ENCODE measurements at regions of chr17 and their contacts with region 1.

Region 1: GRCh38 chr17:18141210-18141803 is 32.8 kb downstream of the MYO15A start:
- DNase-seq: peak; percentile 75
- H3K4me3 ChIP-seq: no peak overlapping the region
- H3K27ac ChIP-seq: no peak overlapping the region
- H3K4me1 ChIP-seq: no peaks in the 10 kb centered on the region
- CTCF ChIP-seq: peak; percentile 89

Region 2: DNA sequence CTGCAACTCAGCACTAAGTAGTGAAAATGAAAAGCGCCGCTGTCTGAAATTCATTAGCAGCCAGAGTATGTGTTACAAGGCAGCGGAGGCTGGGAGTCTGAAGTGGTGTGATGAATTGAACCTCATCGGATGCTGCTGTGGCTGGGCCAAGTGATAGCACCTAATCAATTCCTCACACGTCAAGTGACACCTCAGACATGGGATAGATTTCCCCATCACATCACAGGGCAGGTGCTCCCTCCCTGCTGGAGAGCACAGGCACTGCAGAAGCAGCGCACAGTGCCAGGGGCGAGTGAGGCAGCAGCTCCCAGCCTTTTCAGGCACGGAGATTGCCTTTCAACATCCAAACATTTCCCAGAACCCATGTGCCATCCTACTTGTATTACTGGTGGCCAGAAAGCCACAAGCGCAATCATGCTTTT is 136.4 kb before region 1 on chr17:
- CTCF ChIA-PET with region 1: no interaction called
- POLR2A ChIA-PET with region 1: no interaction called
- intact Hi-C with region 1: no loop called
- DNase-seq: no peak
- H3K4me3 ChIP-seq: no peak overlapping the region
- H3K27ac ChIP-seq: no peak overlapping the region
- H3K4me1 ChIP-seq: no peaks in the 10 kb centered on the region
- CTCF ChIP-seq: no peak

Region 3: GRCh38 chr17:18217412-18218015 is 76.2 kb after region 1 on chr17:
- CTCF ChIA-PET with region 1: no interaction called
- POLR2A ChIA-PET with region 1: no interaction called
- intact Hi-C with region 1: loop called (anchors 2 kb)
- DNase-seq: peak; percentile 70
- H3K4me3 ChIP-seq: no peak overlapping the region
- H3K27ac ChIP-seq: no peak overlapping the region
- H3K4me1 ChIP-seq: no peaks in the 10 kb centered on the region
- CTCF ChIP-seq: peak; percentile 88